ENCODE measurements at regions of chr1 and their contacts with region 1.

Region 1: GRCh38 chr1:8423650-8424538 is 106.0 kb downstream of the SLC45A1 start:
- DNase-seq: peak; percentile 84
- H3K4me3 ChIP-seq: peak overlapping the region; percentile 87
- H3K27ac ChIP-seq: peak overlapping the region; percentile 99
- H3K4me1 ChIP-seq: peaks cover 64% of the 10 kb centered on the region
- CTCF ChIP-seq: no peak

Region 2: DNA sequence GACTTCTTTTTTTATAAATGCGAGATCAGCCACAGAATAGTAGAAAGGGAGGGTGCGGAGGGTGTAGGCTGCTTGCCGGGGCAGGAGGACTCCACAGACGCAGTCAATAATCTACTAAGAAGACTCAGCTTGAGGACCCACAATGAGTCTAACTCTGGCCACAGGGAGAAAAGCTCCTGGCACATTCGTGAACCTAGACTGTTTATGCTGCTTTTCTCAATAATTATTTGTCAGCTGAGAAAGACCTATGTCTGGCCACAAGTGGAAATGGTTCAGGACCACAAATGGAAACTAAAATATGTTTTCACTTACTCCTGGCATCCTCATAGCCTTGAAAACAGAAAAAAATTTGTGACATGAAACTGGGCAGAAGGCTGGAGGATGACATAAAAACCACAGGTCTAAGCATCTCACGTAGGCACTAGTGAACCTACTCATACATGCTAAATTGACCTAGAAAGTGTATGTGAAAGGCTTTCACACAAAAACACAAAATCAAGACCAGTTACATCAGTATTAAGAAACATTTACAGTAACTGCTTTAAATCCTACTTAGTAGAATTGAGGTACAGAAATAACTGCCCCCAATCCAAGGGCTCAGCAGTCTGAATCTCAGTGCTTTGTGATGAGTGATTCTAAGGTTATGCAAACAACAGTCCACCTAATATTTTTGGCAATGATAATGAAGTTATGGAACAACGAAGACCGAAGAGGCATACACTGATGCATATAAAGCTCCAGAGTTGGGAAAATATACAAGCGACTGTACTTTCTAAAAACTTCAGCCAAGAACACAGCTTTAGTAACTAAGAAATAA is 53.5 kb after region 1 on chr1:
- CTCF ChIA-PET with region 1: interaction called, 3 read pairs
- POLR2A ChIA-PET with region 1: interaction called, 11 read pairs
- intact Hi-C with region 1: loop called (anchors 2 kb)
- DNase-seq: peak; percentile 40
- H3K4me3 ChIP-seq: peak overlapping the region; percentile 7
- H3K27ac ChIP-seq: peak overlapping the region; percentile 64
- H3K4me1 ChIP-seq: peaks cover 72% of the 10 kb centered on the region
- CTCF ChIP-seq: no peak

Region 3: GRCh38 chr1:8516793-8517556 is 93.1 kb after region 1 on chr1:
- CTCF ChIA-PET with region 1: no interaction called
- POLR2A ChIA-PET with region 1: interaction called, 12 read pairs
- intact Hi-C with region 1: no loop called
- DNase-seq: peak; percentile 76
- H3K4me3 ChIP-seq: peak overlapping the region; percentile 46
- H3K27ac ChIP-seq: peak overlapping the region; percentile 85
- H3K4me1 ChIP-seq: peaks cover 100% of the 10 kb centered on the region
- CTCF ChIP-seq: no peak

Region 4: DNA sequence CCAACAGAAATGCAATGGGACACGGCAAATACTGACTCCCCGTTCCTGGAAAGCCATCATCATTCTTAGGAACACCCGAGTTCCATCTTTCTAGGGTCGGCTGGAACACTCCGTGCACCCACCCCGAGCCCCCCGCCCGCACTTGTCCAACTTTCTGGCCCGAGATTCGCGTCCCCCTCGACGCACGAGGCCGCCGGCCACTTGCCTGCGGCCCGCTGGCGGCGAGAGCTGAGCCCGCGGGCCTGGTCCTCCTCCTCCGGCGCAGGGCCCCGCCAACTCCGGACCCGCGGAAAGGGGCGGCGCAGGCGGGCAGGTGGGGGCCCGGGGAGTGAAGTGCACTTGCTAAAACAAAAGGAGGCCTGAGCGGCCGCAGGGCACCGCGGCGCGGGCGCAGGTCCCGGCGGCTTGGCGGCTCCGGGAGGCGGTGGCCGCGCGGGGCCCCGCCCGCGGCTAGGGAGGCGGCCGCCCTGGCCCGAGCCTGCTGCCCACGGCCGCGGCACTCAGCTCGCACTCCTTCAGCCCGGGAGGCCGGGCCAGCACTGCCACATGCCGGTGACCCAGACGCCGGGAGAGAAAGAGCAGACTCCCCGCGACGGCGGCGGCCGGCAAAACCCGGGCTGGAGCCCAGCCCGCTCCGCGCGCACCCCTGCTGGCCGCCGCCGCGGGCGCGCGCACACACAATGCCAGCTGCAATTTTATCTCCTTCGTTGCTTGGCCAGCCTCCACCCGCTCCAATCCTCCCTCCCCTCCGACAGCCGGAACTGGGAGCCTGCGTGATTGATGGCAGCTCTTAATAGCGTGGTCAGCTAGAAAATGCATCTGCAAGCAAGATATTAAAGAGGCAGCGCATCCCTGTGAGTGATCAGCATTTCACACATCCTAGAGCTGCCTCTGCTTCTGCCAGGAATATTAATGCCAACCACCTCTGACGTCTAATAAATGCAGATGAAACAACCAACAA is 279.2 kb after region 1 on chr1:
- CTCF ChIA-PET with region 1: no interaction called
- POLR2A ChIA-PET with region 1: no interaction called
- intact Hi-C with region 1: loop called (anchors 5 kb)
- DNase-seq: peak; percentile 67
- H3K4me3 ChIP-seq: peak overlapping the region; percentile 64
- H3K27ac ChIP-seq: no peak overlapping the region
- H3K4me1 ChIP-seq: peaks cover 46% of the 10 kb centered on the region
- CTCF ChIP-seq: no peak

Region 5: DNA sequence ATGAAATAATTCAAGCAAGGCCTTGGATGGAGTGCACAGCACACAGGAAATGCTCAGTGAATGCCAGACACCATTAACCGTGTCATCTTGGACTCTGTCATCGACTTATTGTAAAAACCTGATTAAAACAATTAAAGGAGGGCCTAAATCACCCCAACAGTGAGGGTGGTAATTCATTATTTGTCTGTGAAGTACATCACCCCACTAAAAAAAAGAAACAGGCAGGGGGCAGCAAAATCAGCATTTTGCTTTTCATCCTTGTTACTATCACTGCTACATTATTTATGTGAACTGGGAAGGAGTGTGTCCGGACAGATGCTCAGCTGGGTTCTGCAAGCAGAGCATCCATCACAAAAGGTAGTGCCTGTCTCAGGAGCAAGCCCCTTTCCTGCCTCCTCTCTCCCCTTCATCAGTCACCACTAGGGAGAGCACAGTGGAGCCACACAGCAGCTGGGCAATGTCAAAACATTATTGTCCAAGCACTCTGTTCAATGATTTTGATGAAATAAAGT is 295.0 kb after region 1 on chr1:
- CTCF ChIA-PET with region 1: no interaction called
- POLR2A ChIA-PET with region 1: no interaction called
- intact Hi-C with region 1: no loop called
- DNase-seq: no peak
- H3K4me3 ChIP-seq: no peak overlapping the region
- H3K27ac ChIP-seq: no peak overlapping the region
- H3K4me1 ChIP-seq: peaks cover 52% of the 10 kb centered on the region
- CTCF ChIP-seq: peak; percentile 73

Region 6: GRCh38 chr1:8992936-8993687 is 569.2 kb after region 1 on chr1:
- CTCF ChIA-PET with region 1: no interaction called
- POLR2A ChIA-PET with region 1: no interaction called
- intact Hi-C with region 1: no loop called
- DNase-seq: no peak
- H3K4me3 ChIP-seq: no peak overlapping the region
- H3K27ac ChIP-seq: no peak overlapping the region
- H3K4me1 ChIP-seq: peaks cover 6% of the 10 kb centered on the region
- CTCF ChIP-seq: 0 out of 2 replicates have a peak, but pooled peaks have one; percentile 47